ENCODE measurements at regions of chr3 and their contacts with region 1.

Region 1: GRCh38 chr3:197454014-197454413 is 101.8 kb downstream of the BDH1 start:
- DNase-seq: no peak
- H3K27ac ChIP-seq: no peak overlapping the region
- CTCF ChIP-seq: no peak

Region 2: GRCh38 chr3:197222937-197223370 is 231.1 kb before region 1 on chr3:
- CTCF ChIA-PET with region 1: interaction called, 10 read pairs
- POLR2A ChIA-PET with region 1: no interaction called
- DNase-seq: no peak
- H3K27ac ChIP-seq: no peak overlapping the region
- CTCF ChIP-seq: no peak

Region 3: DNA sequence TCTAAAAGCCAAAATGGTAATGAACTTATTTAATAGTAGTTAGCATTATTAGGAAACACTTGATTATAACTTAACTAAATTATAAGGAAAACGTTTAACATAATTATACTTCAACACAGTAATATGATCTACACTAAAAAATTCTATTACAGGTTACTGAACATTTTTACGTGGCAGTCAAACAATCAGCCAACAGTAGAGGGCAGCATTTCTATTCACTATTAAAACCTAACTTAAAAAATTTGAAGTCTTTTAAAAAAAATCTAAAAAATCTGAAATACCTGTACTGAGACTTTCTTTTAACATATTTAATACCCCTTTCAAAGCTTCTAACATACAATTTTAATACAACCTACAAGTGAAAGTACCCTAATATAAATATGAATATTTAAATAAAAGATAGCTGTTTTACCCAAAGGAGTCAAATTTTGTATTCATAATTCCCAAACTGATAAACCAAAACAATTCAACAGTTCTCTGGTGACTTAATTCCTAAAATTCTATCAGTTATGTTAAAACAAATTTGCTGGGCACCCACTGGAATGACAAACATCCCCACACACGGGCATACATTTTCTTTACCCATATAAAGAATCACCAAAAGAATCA is 197.1 kb before region 1 on chr3:
- CTCF ChIA-PET with region 1: interaction called, 11 read pairs
- POLR2A ChIA-PET with region 1: no interaction called
- DNase-seq: peak; percentile 22
- H3K27ac ChIP-seq: no peak overlapping the region
- CTCF ChIP-seq: peak; percentile 82

Measured in RWPE1 (cell line).